Calu3 (cell line): ENCODE measurements at regions of chrX and their contacts with region 1.

Region 1: GRCh38 chrX:20530406-20530921 is 263.8 kb upstream of the RPS6KA3 start:
- DNase-seq: peak; percentile 66
- H3K4me3 Mint-ChIP-seq: no peak overlapping the region
- H3K27ac Mint-ChIP-seq: no peak overlapping the region
- H3K4me1 Mint-ChIP-seq: peaks cover 16% of the 10 kb centered on the region
- H3K27me3 Mint-ChIP-seq: no peaks in the 10 kb centered on the region
- CTCF ChIP-seq: peak; percentile 61

Region 2: DNA sequence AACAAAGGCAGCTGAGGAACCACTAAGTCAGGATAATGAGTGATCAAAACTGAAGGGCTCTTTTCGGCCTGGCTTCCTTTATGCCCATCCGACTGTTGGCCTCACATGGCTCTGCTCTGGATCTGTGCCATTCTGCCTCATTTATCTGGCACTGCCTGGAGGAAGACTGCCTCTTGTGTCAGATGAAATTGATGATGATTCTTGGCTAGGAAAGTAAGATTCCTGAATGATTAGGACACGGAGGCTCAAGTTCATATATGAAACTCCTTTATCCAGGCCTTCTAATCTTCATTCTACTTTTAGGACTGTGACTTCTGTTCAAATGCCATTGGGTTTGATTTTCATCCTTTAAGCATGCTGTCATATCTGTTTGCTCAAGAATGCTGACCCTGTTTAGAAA is 211.6 kb after region 1 on chrX:
- CTCF ChIA-PET with region 1: no interaction called
- intact Hi-C with region 1: loop called (anchors 10 kb)
- DNase-seq: no peak
- H3K4me3 Mint-ChIP-seq: no peak overlapping the region
- H3K27ac Mint-ChIP-seq: no peak overlapping the region
- H3K4me1 Mint-ChIP-seq: no peaks in the 10 kb centered on the region
- H3K27me3 Mint-ChIP-seq: no peaks in the 10 kb centered on the region
- CTCF ChIP-seq: no peak

Region 3: DNA sequence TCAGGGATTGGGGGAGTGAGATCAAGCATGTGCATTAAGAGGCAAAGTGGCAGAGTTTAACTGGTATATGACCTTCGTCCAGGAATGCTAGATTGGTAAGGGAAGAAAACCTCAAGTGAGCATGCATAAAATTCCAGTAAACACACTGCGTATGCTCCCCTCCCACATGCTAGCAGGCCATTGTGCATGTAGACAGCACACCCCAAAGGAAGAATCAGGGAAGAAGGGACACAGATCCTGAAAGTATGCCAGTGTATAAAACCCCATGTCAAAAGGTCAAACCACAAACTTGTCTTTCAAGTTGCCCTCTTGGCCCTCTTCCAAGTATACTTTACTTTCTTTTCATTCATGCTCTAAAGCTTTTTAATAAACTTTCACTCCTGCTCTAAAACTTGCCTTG is 438.5 kb after region 1 on chrX:
- CTCF ChIA-PET with region 1: no interaction called
- intact Hi-C with region 1: loop called (anchors 1 kb)
- DNase-seq: peak; percentile 36
- H3K4me3 Mint-ChIP-seq: no peak overlapping the region
- H3K27ac Mint-ChIP-seq: no peak overlapping the region
- H3K4me1 Mint-ChIP-seq: peaks cover 9% of the 10 kb centered on the region
- H3K27me3 Mint-ChIP-seq: no peaks in the 10 kb centered on the region
- CTCF ChIP-seq: no peak

Region 4: DNA sequence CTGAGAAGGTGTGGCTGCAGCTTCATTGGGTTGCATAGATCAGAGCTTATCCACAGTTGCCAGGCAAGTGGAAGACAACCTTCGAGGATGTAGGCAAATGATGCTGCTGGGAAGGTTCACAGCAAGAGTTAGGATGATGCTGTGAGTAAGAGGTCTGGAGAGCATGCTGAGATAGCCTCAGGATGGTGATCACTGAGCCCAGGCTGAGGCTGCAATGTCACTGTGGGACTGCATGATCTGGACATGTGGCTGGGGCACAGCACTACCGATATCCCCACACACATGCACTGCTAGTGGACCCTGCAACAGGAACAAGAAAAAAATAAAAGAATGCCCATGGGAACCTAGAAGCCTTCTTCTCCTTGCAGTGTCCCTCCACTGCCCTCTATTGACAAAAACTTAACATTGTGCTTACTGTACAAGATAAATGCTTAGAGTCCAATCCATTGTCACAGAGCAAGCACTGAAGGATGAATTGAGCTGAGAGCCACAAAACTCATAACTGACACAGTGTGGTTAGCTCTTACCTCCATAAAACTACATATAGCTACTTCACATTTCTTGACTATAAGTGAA is 949.3 kb after region 1 on chrX:
- CTCF ChIA-PET with region 1: interaction called, 5 read pairs
- intact Hi-C with region 1: loop called (anchors 2 kb)
- DNase-seq: peak; percentile 11
- H3K4me3 Mint-ChIP-seq: no peak overlapping the region
- H3K27ac Mint-ChIP-seq: no peak overlapping the region
- H3K4me1 Mint-ChIP-seq: no peaks in the 10 kb centered on the region
- H3K27me3 Mint-ChIP-seq: no peaks in the 10 kb centered on the region
- CTCF ChIP-seq: peak; percentile 48

Region 5: DNA sequence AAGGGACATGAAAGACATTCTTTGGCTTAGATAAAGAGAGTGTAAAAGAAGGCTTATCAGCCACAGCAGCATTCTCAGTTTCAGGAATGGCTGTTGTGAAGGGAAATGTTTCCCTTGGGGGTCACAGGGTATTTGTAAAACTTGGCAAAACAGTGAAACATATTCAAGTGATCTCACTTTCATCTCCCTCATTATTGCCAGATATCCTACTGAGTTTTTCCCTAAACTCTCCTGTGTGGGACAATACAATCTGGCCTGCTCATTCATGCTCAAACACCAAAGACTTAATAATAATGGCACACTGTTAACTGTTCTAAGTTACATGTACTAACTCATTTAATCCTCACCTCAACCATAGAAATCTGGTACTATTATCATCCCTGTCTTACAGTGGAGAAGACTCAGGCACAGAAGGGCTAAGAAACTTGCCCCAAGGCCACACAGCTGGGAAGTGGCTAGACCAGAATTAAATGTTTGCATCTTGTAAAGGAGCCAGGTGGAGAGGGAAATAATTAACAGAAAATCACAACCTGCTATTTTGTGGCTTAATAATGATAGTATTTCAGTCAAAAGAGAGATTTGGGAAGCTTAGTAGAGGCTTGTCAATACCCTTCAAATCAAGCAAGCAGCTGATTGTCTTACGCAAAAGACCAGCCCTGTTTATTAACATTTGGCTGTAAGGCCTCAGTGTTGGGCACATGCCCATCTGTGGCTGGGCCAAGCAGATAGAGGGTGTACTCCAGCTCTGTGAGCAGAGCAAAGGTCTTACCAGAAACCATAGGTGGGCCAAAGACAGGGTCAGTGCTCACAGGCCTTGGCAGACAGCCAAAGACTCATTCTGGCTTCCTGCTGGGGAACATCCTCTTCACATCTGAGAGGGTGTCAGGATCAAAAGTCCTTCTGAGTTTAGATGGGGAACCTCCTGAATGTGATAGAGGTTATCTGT is 1210.1 kb after region 1 on chrX:
- CTCF ChIA-PET with region 1: no interaction called
- intact Hi-C with region 1: loop called (anchors 5 kb)
- DNase-seq: peak; percentile 14
- H3K4me3 Mint-ChIP-seq: no peak overlapping the region
- H3K27ac Mint-ChIP-seq: no peak overlapping the region
- H3K4me1 Mint-ChIP-seq: peaks cover 31% of the 10 kb centered on the region
- H3K27me3 Mint-ChIP-seq: no peaks in the 10 kb centered on the region
- CTCF ChIP-seq: no peak